HCT116 (cell line): ENCODE measurements at regions of chr7 and their contacts with region 1.

Region 1: DNA sequence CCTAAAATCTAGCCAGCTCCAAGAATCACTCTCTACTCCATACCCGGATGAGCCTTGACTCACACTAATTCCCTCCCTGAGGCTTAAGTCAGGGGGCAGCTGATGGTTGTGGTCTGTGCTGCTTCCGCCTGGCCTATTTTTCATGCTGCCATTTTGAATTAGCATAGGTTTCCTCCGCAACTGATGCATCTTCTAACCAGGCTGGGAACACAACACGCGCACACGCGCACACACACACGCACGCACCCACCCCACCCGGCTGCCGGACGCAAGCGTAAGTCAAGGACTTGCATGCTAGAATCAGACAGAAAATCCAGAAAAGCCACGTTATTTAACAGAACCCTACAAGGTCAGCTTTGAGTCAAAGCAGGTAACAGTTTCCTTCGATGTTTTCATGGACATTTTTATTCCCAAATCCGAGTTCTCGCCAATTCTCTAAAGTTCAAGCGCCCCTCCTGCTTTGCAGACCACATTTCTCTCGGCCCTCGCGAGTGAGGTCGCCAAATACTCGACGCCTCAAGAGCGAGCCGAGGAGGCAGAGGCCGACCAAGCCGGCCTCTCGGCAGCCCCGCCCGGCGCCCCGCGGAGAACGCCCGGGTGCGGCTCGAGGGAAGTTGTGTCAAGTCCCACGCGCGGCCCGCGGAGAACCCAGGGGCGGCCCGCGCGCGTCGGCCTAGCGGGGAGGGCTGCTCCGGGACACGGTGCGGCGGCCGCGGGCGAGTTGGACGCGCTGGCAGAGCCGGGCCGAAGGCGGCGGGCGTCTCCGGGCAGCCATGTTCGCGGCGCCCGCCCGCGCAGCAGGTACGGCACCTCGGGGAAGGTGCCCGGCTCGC is 961 bp downstream of the SCRN1 start:
- DNase-seq: peak; percentile 67
- ATAC-seq: peak; percentile 63
- H3K4me3 ChIP-seq: peak overlapping the region; percentile 80 to 88
- H3K27ac ChIP-seq: peak overlapping the region; percentile 100
- H3K4me1 ChIP-seq: peaks cover 14 to 42% of the 10 kb centered on the region in 2 experiments
- H3K27me3 ChIP-seq: no peaks in the 10 kb centered on the region
- CTCF ChIP-seq: no peak
- POLR2A ChIP-seq: no peak
- RAD21 ChIP-seq: no peak

Region 2: GRCh38 chr7:29921404-29922010 is 67.1 kb before region 1 on chr7:
- CTCF ChIA-PET with region 1: no interaction called
- POLR2A ChIA-PET with region 1: no interaction called
- RAD21 ChIA-PET with region 1: no interaction called
- intact Hi-C with region 1: no loop called
- DNase-seq: peak; percentile 46
- ATAC-seq: peak; percentile 93
- H3K4me3 ChIP-seq: no peak overlapping the region
- H3K27ac ChIP-seq: no peak overlapping the region
- H3K4me1 ChIP-seq: no peaks in the 10 kb centered on the region
- H3K27me3 ChIP-seq: no peaks in the 10 kb centered on the region
- CTCF ChIP-seq: peak; percentile 77 to 96 (median 88)
- POLR2A ChIP-seq: no peak
- RAD21 ChIP-seq: peak; percentile 86

Region 3: GRCh38 chr7:30026229-30027064 is 37.8 kb after region 1 on chr7 and contains the start of gene FKBP14:
- CTCF ChIA-PET with region 1: no interaction called
- POLR2A ChIA-PET with region 1: interaction called, 3 read pairs
- RAD21 ChIA-PET with region 1: no interaction called
- intact Hi-C with region 1: loop called (anchors 1 kb)
- DNase-seq: peak; percentile 99
- ATAC-seq: peak; percentile 85
- H3K4me3 ChIP-seq: peak within 1 kb of the TSS; percentile 50 to 72
- H3K27ac ChIP-seq: peak within 1 kb of the TSS; percentile 44; the same call in 1 of the 2 replicates
- H3K4me1 ChIP-seq: peaks cover 15 to 32% of the 10 kb centered on the region in 2 experiments
- H3K27me3 ChIP-seq: no peaks in the 10 kb centered on the region
- CTCF ChIP-seq: no peak
- POLR2A ChIP-seq: peak; percentile 47
- RAD21 ChIP-seq: no peak
- total RNA-seq, gene FKBP14: 13.6 TPM

Region 4: GRCh38 chr7:30363778-30364563 is 375.3 kb after region 1 on chr7:
- CTCF ChIA-PET with region 1: no interaction called
- POLR2A ChIA-PET with region 1: no interaction called
- RAD21 ChIA-PET with region 1: no interaction called
- intact Hi-C with region 1: no loop called
- DNase-seq: no peak
- ATAC-seq: no peak
- H3K4me3 ChIP-seq: no peak overlapping the region
- H3K27ac ChIP-seq: no peak overlapping the region
- H3K4me1 ChIP-seq: no peaks in the 10 kb centered on the region
- H3K27me3 ChIP-seq: no peaks in the 10 kb centered on the region
- CTCF ChIP-seq: no peak
- POLR2A ChIP-seq: no peak
- RAD21 ChIP-seq: no peak

Region 5: GRCh38 chr7:31095286-31096197 is 1106.9 kb after region 1 on chr7:
- CTCF ChIA-PET with region 1: no interaction called
- POLR2A ChIA-PET with region 1: no interaction called
- RAD21 ChIA-PET with region 1: no interaction called
- intact Hi-C with region 1: no loop called
- DNase-seq: no peak
- ATAC-seq: no peak
- H3K4me3 ChIP-seq: no peak overlapping the region
- H3K27ac ChIP-seq: no peak overlapping the region
- H3K4me1 ChIP-seq: no peaks in the 10 kb centered on the region
- H3K27me3 ChIP-seq: peaks cover 69% of the 10 kb centered on the region
- CTCF ChIP-seq: no peak
- POLR2A ChIP-seq: no peak
- RAD21 ChIP-seq: no peak